GM12878 (cell line): ENCODE measurements at regions of chr19 and their contacts with region 1.

Region 1: GRCh38 chr19:29714953-29715700 is at the start of gene C19orf12:
- DNase-seq: no peak
- ATAC-seq: peak; percentile 86
- H3K4me3 ChIP-seq: peak within 1 kb of the TSS; percentile 78
- H3K27ac ChIP-seq: peak within 1 kb of the TSS; percentile 79
- H3K4me1 ChIP-seq: peaks cover 11% of the 10 kb centered on the region
- H3K27me3 ChIP-seq: no peaks in the 10 kb centered on the region
- CTCF ChIP-seq: no peak
- EP300 ChIP-seq: no peak
- POLR2A ChIP-seq: peak; percentile 91
- RAD21 ChIP-seq: no peak
- polyA plus RNA-seq, gene C19orf12: 2.3 to 6.6 TPM

Region 2: DNA sequence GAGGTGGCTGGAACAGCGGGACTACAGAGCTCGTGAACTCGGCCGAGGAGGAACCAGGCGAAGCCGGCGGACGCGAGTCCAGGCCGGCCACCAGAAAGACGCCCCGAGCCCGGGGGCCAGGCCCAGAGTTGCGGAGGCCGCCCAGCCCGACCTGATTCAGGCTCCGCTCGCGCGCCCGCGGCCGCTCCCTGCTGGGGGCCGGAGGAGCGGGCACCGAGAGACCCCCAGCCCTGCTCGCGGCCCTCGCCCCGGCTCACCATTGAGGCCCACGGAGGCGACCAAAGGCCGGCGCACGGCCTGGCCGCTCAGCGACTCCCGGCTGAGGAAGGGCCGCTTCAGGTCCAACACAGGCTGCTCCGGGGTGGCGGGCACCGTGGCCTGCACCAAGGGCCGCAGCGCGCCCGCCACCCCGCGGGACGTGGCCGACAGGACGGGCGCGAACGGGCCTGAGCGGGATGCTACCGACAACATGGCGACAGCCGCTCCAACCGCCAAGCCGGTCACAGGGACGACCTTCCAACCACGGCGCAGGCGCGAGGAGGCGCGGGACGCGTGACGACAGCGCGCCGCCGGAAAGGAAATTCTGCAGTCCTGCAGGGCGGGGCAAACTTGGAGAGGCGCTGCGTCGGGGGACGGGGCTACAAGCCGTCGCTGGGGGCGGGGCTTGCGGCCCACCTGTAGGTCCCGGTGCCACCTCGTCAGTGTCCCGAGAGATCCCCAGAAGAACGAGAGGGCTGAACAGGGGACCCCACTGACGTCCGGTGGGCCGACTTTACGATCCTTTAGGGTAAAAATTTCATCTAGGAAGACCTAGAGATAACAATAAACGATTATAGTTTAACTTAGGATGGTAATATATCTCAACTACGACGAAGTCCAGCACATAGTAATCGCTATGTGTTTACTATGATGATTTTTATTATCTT is 502.2 kb before region 1 on chr19 and contains the start of gene UQCRFS1:
- CTCF ChIA-PET with region 1: no interaction called
- POLR2A ChIA-PET with region 1: no interaction called
- RAD21 ChIA-PET with region 1: no interaction called
- SMC1A ChIA-PET with region 1: no interaction called
- in situ Hi-C with region 1: loop called (anchors 25 kb)
- intact Hi-C with region 1: no loop called
- DNase-seq: peak; percentile 77
- ATAC-seq: peak; percentile 98
- H3K4me3 ChIP-seq: peak within 1 kb of the TSS; percentile 76
- H3K27ac ChIP-seq: peak within 1 kb of the TSS; percentile 94
- H3K4me1 ChIP-seq: no peaks in the 10 kb centered on the region
- H3K27me3 ChIP-seq: no peaks in the 10 kb centered on the region
- CTCF ChIP-seq: no peak
- EP300 ChIP-seq: no peak
- POLR2A ChIP-seq: peak; percentile 91
- RAD21 ChIP-seq: no peak
- polyA plus RNA-seq, gene UQCRFS1: 9.3 to 41.9 TPM

Region 3: GRCh38 chr19:29622138-29623070 is 92.7 kb before region 1 on chr19:
- CTCF ChIA-PET with region 1: interaction called, 12 read pairs
- POLR2A ChIA-PET with region 1: interaction called, 3 read pairs
- RAD21 ChIA-PET with region 1: interaction called, 9 read pairs
- SMC1A ChIA-PET with region 1: interaction called, 3 read pairs
- in situ Hi-C with region 1: no loop called
- intact Hi-C with region 1: no loop called
- DNase-seq: no peak
- ATAC-seq: peak; percentile 54
- H3K4me3 ChIP-seq: no peak overlapping the region
- H3K27ac ChIP-seq: no peak overlapping the region
- H3K4me1 ChIP-seq: peaks cover 17% of the 10 kb centered on the region
- H3K27me3 ChIP-seq: no peaks in the 10 kb centered on the region
- CTCF ChIP-seq: no peak
- EP300 ChIP-seq: no peak
- POLR2A ChIP-seq: no peak
- RAD21 ChIP-seq: no peak

Region 4: DNA sequence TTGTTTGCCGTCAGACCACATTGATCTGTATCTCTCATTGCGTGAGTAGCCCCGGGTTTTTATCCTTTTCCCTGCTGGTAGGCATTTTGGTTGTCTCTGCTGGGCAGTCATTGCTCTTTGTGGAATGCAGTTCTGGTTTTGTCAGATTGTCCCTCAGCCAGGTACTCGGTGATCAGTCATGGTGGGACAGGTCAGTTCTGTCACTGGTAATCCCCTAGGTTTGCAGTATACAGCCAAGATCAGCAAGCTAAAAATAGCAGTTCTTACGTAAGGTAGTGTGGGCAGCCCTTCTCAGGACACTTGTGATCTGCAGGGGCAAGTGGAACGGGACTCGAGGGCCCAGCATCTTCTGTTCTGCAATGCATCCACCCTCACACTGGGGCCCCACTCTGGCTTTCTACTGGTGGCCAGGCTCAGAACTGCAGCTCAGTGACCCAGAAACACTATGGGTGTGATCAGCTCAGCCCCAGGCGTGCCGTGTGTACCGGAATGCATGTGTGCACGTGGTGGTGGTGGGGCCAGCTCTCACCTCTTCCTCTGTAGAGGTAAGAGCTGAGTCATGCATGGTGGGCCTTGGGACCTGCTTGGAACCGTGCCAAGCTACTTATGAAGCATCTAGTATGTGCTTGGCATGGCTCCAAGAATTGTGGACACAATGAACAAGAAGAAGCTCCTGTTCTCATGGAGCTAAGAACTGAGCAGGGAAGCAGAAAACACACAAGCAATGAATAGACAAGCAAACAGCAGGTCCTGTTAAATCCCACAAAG is 43.5 kb before region 1 on chr19:
- CTCF ChIA-PET with region 1: interaction called, 111 read pairs
- POLR2A ChIA-PET with region 1: interaction called, 16 read pairs
- RAD21 ChIA-PET with region 1: interaction called, 78 read pairs
- SMC1A ChIA-PET with region 1: interaction called, 22 read pairs
- in situ Hi-C with region 1: no loop called
- intact Hi-C with region 1: no loop called
- DNase-seq: peak; percentile 88
- ATAC-seq: peak; percentile 85
- H3K4me3 ChIP-seq: peak overlapping the region; percentile 59
- H3K27ac ChIP-seq: peak overlapping the region; percentile 89
- H3K4me1 ChIP-seq: peaks cover 65% of the 10 kb centered on the region
- H3K27me3 ChIP-seq: no peaks in the 10 kb centered on the region
- CTCF ChIP-seq: peak; percentile 31 to 68 (median 65); a peak in 5 of 6 replicates
- EP300 ChIP-seq: peak in 1 of 2 experiments; percentile 39; a peak in 1 of 4 replicates
- POLR2A ChIP-seq: 0 out of 2 replicates have a peak, but pooled peaks have one; percentile 38
- RAD21 ChIP-seq: no peak

Region 5: DNA sequence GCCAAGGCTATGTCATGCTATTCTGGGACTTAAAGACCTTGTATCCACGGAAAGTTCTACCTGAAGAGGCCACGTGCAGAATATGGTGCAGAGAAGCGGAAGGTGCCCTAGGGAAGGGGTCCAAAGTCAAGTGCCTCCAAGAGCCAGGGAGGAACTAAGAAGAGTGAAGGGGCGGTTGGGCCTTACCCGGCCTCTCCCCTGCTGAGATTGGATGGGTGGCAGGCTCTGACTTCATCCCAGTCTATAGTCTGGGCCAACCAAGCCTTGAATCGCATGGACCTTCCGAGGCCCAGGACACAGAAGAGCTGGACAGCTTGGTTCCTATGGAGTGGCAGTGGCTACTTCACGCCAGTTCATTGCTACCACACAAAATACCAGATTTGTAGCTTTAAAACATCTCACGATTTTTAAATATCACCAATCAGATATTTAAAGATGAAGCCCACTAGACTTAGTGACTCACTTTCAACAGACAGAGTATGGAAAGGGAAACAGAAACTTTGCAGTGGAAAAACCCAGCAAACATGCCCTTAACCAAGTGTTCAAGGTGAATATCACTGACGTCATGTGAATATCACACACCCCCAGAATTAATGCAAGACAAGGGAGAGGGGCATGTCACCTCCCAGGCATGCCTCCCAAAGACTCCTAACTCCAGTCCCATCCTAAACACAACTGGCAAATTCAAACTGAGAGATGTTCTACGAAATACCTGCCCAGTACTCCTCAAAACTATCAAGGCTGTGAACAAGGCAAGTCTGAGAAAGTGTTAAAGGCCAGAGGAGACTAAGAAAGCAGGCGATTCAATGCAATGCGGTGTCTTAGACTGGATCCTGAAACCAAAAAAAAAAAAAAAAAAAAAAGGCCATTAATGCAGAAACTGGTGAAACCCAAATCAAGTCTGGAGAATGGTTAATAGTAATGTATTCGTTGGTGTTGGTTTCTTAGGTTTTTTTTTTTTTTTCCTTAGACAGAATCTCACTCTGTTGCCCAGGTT is 10.3 kb before region 1 on chr19:
- CTCF ChIA-PET with region 1: interaction called, 13 read pairs
- POLR2A ChIA-PET with region 1: interaction called, 3 read pairs
- RAD21 ChIA-PET with region 1: interaction called, 16 read pairs
- SMC1A ChIA-PET with region 1: interaction called, 6 read pairs
- in situ Hi-C with region 1: no loop called
- intact Hi-C with region 1: no loop called
- DNase-seq: peak; percentile 42
- ATAC-seq: peak; percentile 92
- H3K4me3 ChIP-seq: no peak overlapping the region
- H3K27ac ChIP-seq: peak overlapping the region; percentile 79
- H3K4me1 ChIP-seq: peaks cover 17% of the 10 kb centered on the region
- H3K27me3 ChIP-seq: no peaks in the 10 kb centered on the region
- CTCF ChIP-seq: no peak
- EP300 ChIP-seq: no peak
- POLR2A ChIP-seq: no peak
- RAD21 ChIP-seq: no peak